Right ventricle myocardium inferior (tissue), 1 donor: ENCODE measurements at regions of chr18 and their contacts with region 1.

Region 1: DNA sequence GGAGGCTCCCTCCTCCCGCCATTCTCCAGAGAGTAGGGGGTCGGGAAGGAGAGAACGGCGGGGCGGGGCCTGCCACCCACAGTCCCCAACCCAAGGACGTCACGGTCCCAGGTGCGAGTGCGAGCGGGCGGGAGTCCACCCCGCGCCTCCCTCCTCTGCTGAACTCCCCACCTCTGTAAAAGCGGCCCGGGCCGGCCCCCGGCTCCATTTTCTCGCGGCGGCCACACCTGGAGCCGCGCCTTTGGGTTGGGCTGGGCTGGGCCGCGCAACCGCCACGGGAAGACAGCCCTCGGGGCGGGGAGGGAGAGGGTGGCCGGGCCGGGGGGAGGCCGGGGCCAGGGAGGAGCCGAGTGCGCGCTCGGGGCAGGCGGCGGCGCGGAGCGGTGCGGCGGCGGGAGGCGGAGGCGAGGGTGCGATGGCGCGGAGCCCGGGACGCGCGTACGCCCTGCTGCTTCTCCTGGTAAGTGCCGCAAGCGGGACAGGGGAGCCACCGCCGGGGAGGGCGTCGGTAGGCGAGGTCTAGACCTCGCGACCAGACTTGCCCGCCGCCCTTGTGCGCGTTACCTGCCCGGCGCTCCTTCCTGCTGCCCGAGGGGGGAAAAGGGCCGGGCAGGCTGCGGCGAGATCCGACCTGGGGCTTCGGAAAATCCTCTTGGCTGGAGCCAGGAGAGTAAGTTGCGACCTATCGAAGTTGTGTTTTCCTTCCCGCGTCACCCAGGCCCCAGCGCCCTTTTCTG is at the start of gene DSG2:
- DNase-seq: peak; percentile 85
- ATAC-seq: peak; percentile 97
- total RNA-seq, gene DSG2: 35.7 TPM

Region 2: DNA sequence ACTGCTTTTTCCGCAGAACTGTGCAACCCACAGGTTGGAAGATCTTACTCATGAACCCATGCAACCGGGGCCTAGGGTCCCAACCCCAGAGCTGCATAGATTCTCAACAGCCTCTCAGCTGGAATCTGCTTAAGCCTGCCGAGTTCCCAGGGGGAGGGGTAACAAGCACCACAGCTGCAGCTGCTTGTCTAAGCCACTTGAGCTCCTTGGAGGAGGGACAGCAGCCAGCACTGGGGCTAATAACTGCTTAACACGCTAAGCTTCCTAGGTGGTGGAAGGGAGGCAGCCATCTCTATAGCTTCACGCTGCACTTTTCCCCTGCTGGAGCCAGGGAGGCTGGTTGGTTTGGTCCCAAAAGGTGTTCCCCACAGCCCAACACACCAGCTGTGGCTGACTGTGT is 767.1 kb before region 1 on chr18:
- intact Hi-C with region 1: no loop called
- DNase-seq: peak; percentile 42
- ATAC-seq: no peak

Region 3: GRCh38 chr18:31343454-31343853 is 154.6 kb before region 1 on chr18:
- intact Hi-C with region 1: no loop called
- DNase-seq: no peak
- ATAC-seq: no peak

Region 4: GRCh38 chr18:31424383-31424988 is 73.5 kb before region 1 on chr18:
- intact Hi-C with region 1: loop called (anchors 2 kb)
- DNase-seq: no peak
- ATAC-seq: no peak